PC-3 (cell line): ENCODE measurements at regions of chr6 and their contacts with region 1.

Region 1: DNA sequence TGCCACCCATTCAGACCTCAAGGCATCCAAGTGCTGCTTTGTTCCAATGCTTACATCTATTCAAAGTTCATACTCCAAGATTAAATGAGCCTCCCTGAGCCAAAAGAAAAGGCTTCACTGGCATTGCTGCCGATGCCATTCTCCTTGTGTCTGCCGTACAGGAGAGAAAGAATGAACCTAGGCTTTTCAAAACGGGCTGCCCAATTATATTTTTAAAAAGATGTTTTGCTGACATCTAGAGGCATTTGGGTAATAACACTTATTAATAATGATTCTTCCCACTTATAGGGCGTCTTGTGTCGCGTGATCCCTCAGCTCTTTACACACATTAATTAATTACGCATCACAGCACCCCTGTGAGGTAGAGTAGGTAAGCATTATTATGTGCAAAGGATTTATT is 545.6 kb downstream of the PKHD1 start:
- DNase-seq: peak; percentile 65
- ATAC-seq: peak; percentile 64
- H3K4me3 ChIP-seq: no peak overlapping the region
- H3K27ac ChIP-seq: no peak overlapping the region
- H3K4me1 ChIP-seq: no peaks in the 10 kb centered on the region
- H3K27me3 ChIP-seq: peaks cover 31% of the 10 kb centered on the region
- CTCF ChIP-seq: peak; percentile 57

Region 2: GRCh38 chr6:50264995-50265571 is 1276.8 kb before region 1 on chr6:
- CTCF ChIA-PET with region 1: no interaction called
- POLR2A ChIA-PET with region 1: no interaction called
- intact Hi-C with region 1: loop called (anchors 5 kb)
- DNase-seq: peak; percentile 42
- ATAC-seq: no peak; the same call in 1 of the 2 replicates
- H3K4me3 ChIP-seq: no peak overlapping the region
- H3K27ac ChIP-seq: no peak overlapping the region
- H3K4me1 ChIP-seq: no peaks in the 10 kb centered on the region
- H3K27me3 ChIP-seq: peaks cover 23% of the 10 kb centered on the region
- CTCF ChIP-seq: peak; percentile 63

Region 3: GRCh38 chr6:50655848-50656453 is 885.9 kb before region 1 on chr6:
- CTCF ChIA-PET with region 1: no interaction called
- POLR2A ChIA-PET with region 1: no interaction called
- intact Hi-C with region 1: loop called (anchors 2 kb)
- DNase-seq: peak; percentile 39
- ATAC-seq: no peak
- H3K4me3 ChIP-seq: no peak overlapping the region
- H3K27ac ChIP-seq: no peak overlapping the region
- H3K4me1 ChIP-seq: peaks cover 28% of the 10 kb centered on the region
- H3K27me3 ChIP-seq: no peaks in the 10 kb centered on the region
- CTCF ChIP-seq: peak; percentile 74

Region 4: DNA sequence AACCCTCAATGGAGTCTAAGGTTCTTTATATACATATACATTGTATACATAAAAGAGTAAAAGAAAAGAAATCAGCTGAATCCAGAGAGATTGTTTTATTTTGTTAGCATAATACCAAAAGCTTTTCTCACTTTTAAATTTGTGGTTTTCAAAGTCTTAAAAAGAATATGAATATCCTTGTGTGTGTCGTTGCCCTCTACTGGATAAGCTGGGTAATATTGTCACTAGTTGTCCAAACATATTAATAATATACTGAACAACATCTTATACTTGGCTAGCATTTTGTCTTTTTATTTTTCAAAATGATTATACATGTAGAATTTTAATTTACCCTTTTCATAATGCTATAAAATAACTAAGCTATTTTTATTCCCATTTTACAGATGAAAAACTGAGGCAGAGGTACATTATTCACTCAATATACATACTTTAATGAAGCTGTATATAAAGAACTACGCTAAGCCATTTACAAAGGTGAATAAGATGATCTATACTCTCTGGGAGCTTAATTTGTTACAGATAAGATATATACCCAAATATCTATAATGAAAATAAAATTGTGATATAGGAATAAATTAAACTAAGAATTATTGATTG is 191.4 kb before region 1 on chr6:
- CTCF ChIA-PET with region 1: no interaction called
- POLR2A ChIA-PET with region 1: no interaction called
- intact Hi-C with region 1: loop called (anchors 5 kb)
- DNase-seq: peak; percentile 45
- ATAC-seq: no peak
- H3K4me3 ChIP-seq: no peak overlapping the region
- H3K27ac ChIP-seq: no peak overlapping the region
- H3K4me1 ChIP-seq: no peaks in the 10 kb centered on the region
- H3K27me3 ChIP-seq: no peaks in the 10 kb centered on the region
- CTCF ChIP-seq: peak; percentile 74

Region 5: GRCh38 chr6:51855310-51856082 is 313.6 kb after region 1 on chr6:
- CTCF ChIA-PET with region 1: no interaction called
- POLR2A ChIA-PET with region 1: no interaction called
- intact Hi-C with region 1: no loop called
- DNase-seq: peak; percentile 94
- ATAC-seq: peak; percentile 59
- H3K4me3 ChIP-seq: no peak overlapping the region
- H3K27ac ChIP-seq: peak overlapping the region; percentile 86; the same call in 1 of the 2 replicates
- H3K4me1 ChIP-seq: peaks cover 31% of the 10 kb centered on the region
- H3K27me3 ChIP-seq: no peaks in the 10 kb centered on the region
- CTCF ChIP-seq: peak; percentile 92